ENCODE measurements at regions of chr1 and their contacts with region 1.

Region 1: DNA sequence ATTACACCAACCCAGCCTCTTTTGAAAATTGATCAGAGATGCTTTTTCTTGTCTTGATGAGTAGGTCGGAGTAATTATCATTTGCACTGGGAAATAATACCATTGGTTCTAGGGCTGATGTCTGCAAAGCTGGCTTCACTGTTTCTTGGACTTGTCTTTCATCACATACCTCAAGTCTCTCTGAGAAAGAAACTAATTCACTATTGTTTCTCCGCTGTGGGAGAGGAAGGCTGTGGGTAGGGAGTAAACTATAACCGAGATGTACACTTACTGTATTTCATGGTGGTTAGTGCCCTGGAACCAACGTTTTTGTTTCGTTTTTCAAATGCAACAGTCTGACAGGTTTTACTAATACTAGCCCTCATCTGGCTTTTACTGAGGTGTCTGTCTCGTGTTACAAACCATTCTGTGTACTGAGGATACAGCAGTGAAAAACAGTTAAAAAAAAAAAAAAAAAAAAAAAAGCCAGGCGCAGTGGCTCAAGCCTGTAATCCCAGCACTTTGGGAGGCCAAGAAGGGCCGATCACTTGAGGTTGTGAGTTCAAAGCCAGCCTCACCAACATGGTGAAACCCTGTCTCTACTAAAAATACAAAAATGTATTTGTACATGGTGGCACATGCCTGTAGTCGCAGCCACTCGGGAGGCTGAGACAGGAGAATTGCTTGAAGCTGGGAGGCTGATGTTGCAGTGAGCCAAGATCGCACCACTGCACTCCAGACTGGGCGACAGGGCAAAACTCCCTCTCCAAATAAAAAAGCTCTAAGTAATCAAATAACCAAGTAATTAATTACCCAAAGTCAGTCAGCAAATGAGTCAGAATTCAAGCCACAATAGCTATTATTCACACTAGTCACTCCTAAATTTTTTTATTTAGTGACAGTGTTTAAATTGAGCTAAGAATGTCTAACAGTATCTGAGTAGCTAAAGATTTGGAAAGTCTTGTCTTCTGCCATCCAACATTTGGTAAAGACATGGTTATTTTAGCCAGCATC is 23.3 kb downstream of the TOMM20 start:
- DNase-seq: peak; percentile 74
- ATAC-seq: peak; percentile 79
- H3K4me3 Mint-ChIP-seq: peak overlapping the region; percentile 73
- H3K27ac Mint-ChIP-seq: peak overlapping the region; percentile 97
- H3K4me1 Mint-ChIP-seq: peaks cover 46% of the 10 kb centered on the region
- H3K27me3 Mint-ChIP-seq: peaks cover 4% of the 10 kb centered on the region

Region 2: DNA sequence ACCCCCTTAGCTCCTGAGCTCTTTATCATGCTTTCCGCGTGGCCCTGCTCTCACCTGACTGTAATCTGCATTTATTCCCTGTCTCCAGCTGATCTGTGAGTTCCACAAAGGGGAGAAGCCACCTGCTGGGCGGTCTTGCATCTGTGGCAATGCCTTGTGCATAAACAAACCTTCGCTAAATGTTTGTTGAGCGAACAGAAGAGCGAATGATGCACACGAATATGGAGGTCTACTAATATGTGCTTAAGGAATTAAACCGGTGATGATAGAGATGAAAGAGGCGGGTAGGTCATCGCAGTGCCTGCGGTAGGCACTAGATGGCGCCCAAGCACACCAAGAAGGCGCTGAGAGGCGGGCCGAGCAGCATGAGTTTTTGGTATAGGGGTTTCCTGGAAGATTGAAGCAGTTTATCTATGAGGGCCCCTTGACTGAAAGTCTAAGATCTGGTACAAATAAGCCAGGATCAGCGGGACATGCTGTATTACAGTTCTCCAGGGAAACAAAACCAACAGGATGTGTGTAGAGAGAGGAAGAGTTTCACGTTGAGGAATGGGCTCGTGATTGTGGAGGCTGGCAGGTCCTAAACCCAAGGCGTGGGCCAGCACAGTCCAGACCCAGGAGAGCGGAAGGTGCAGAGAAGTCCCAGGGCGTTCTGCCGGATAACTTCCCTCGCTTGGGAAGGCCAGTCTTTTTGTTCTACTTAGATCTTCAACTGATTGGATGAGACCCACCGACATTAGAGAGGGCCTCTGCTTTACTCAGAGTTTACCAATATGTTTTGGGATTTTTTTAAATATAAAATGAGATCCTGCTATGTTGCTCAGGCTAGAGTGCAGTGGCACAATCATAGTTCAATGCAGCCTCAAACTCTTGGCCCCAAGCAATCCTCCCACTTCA is 11.4 kb before region 1 on chr1:
- CTCF ChIA-PET with region 1: interaction called, 14 read pairs
- DNase-seq: peak; percentile 88
- ATAC-seq: peak; percentile 90
- H3K4me3 Mint-ChIP-seq: no peak overlapping the region
- H3K27ac Mint-ChIP-seq: peak overlapping the region; percentile 54
- H3K4me1 Mint-ChIP-seq: peaks cover 19% of the 10 kb centered on the region
- H3K27me3 Mint-ChIP-seq: peaks cover 3% of the 10 kb centered on the region

Region 3: DNA sequence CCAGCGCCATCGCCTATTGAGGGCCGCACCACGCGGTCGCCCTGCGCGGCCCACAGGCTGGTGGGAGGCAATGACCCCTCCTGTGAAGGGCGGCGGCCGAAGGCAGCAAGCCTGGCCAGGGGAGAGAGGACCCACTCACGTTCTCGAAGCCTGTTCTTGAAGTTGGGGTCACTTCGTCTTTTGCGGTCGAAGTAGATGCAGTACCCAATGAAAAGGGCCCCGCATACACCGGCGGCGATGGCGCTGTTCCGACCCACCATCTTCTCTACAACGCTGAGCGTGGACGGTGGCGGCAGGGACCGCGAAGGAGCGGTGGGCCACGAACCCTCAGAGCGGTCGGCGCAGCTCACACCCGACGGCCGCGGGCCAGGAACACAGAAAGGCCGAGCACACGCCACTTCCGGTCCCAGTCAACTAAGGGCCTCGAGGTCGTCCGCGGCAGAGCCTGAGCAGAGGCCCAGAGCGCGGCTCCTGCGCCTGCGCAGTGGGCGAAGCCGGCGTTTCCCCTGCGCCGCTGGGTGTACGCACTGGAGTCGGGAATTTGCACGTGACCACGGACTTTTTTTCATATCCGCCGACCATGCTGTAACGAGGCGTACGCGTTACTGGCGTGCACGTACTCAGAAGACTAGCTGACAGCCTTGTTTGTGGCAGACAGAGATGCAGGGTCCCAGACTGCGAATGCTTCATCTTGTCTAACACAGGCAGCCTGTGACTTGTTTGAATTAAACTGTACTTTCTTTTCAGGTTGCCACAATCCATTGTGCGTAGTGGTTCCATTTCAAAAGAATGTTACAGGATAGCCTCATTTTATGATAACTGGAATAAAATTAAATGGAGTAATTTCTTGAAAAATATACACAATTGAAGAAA is 23.3 kb after region 1 on chr1 and contains the start of gene TOMM20:
- CTCF ChIA-PET with region 1: interaction called, 38 read pairs
- DNase-seq: peak; percentile 97
- ATAC-seq: peak; percentile 94
- H3K4me3 Mint-ChIP-seq: peak within 1 kb of the TSS; percentile 88
- H3K27ac Mint-ChIP-seq: peak within 1 kb of the TSS; percentile 98
- H3K4me1 Mint-ChIP-seq: peaks cover 38% of the 10 kb centered on the region
- H3K27me3 Mint-ChIP-seq: no peaks in the 10 kb centered on the region
- total RNA-seq, gene TOMM20: 71.1 to 76.7 TPM

Region 4: GRCh38 chr1:235328357-235329138 is 223.2 kb after region 1 on chr1 and contains the start of gene GGPS1:
- CTCF ChIA-PET with region 1: no interaction called
- DNase-seq: peak; percentile 99
- ATAC-seq: peak; percentile 81
- H3K4me3 Mint-ChIP-seq: no peak within 1 kb of the TSS
- H3K27ac Mint-ChIP-seq: no peak within 1 kb of the TSS
- H3K4me1 Mint-ChIP-seq: peaks cover 43% of the 10 kb centered on the region
- H3K27me3 Mint-ChIP-seq: no peaks in the 10 kb centered on the region
- total RNA-seq, gene GGPS1: 22.7 to 23.9 TPM

Region 5: DNA sequence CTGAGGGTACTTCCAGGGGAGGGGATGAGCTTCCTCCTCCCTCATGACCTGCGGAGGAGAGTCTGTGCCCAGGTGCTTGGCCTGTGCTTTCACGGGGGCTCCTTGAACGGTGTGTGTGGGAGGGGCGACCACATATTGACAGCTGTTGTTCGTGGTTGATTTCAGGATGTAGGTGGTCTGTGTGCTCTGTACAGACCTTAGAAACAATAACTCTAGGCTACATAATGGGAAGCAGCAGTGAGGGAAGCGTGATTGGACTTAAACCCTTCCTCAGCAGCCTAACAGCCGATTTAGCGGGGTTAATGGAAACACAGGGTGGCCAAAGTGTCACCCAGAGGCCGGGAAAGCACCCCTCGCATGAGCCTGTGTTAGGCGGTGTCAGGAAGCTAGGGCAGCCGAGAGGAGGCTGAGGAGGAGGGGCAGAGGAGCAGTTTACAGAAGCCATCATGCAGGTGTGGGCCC is 317.9 kb after region 1 on chr1:
- CTCF ChIA-PET with region 1: interaction called, 10 read pairs
- DNase-seq: peak; percentile 60
- ATAC-seq: peak; percentile 80
- H3K4me3 Mint-ChIP-seq: peak overlapping the region; percentile 8
- H3K27ac Mint-ChIP-seq: peak overlapping the region; percentile 65
- H3K4me1 Mint-ChIP-seq: peaks cover 20% of the 10 kb centered on the region
- H3K27me3 Mint-ChIP-seq: no peaks in the 10 kb centered on the region

Measured in activated CD8-positive, alpha-beta memory T cell treated with anti-CD3 and anti-CD28 coated beads, Interleukin-2, amount 10 ng/mL, durations not matched to agents 7 days and 5 days (primary cell).